Activated T-helper 2 cell treated with anti-CD3 and anti-CD28 coated beads, Interferon-gamma antibody, Interleukin-2, Interleukin-4, amounts not matched to agents 10 μg/mL and 5 μg/mL and 100 μg/mL, durations not matched to agents 14 hours and 24 hours and 36 hours (primary cell): ENCODE measurements at regions of chr18 and their contacts with region 1.

Region 1: DNA sequence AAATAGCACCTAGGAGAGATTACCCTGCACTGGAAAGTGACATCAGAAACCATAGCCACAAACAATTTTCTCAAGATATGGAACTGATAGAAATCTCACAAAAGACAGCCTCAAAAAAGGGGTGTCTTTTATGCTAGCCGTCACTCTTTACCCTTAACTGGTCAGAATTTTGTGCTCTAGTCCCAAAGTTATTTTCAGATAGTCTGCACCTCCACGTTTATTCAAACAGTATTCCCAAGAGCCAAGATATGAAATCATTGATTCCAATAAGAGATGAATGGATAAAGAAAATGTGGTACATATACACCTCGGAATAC is 23.5 kb upstream of the PMAIP1 start:
- DNase-seq: no peak
- H3K4me3 Mint-ChIP-seq: no peak overlapping the region
- H3K27ac Mint-ChIP-seq: no peak overlapping the region
- H3K4me1 Mint-ChIP-seq: peaks cover 31% of the 10 kb centered on the region
- H3K27me3 Mint-ChIP-seq: no peaks in the 10 kb centered on the region

Region 2: DNA sequence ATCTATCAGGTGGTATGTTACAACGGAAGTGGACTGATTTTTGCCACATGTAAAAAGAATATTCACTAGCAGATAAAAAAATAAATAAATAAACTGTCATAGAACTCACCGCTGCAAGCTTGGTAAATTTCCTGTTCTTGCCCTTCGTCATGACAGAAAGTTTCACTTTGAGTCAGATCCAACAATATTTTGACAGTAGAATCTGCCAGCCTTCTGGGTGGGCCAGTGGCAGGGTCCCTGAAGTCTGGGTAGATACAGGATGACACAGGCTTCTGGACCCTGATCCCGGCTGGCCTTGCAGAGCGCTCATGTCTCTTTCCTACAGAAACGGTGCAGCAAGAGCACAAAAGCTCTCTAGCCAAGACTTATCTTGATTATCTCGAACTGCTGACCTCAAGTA is 74.2 kb before region 1 on chr18:
- intact Hi-C with region 1: no loop called
- DNase-seq: no peak
- H3K4me3 Mint-ChIP-seq: no peak overlapping the region
- H3K27ac Mint-ChIP-seq: no peak overlapping the region
- H3K4me1 Mint-ChIP-seq: peaks cover 12% of the 10 kb centered on the region
- H3K27me3 Mint-ChIP-seq: peaks cover 4% of the 10 kb centered on the region

Region 3: DNA sequence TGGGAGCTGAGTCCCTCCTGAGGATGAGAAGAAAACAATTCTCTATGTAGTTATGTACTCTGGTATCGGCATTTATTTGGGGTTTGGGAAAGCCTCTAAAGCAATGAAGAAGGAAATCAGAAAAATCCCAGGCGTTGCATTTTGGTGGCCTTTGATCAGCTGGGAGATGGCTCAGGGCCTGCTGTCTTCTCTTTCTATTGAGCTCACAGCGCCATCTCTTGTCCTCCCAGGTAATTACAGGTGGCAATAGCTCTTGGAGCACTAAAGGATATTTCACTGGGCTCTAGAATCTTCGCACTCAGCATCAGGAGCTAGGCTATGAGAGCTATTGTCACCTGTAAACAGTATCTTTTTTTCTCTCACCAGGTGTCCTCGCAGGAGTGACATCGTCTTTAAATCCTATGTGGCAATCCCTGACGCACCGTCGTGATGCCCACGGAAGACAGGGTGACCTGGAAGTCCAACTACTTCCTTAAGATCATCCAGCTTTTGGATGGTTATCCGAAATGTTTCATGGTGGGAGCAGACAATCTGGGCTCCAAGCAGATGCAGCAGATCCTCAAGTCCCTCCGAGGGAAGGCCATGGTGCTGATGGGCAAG is 52.6 kb before region 1 on chr18:
- intact Hi-C with region 1: no loop called
- DNase-seq: peak; percentile 24
- H3K4me3 Mint-ChIP-seq: no peak overlapping the region
- H3K27ac Mint-ChIP-seq: no peak overlapping the region
- H3K4me1 Mint-ChIP-seq: no peaks in the 10 kb centered on the region
- H3K27me3 Mint-ChIP-seq: peaks cover 14% of the 10 kb centered on the region

Region 4: GRCh38 chr18:59837586-59837985 is 38.7 kb before region 1 on chr18:
- intact Hi-C with region 1: loop called (anchors 5 kb)
- DNase-seq: peak; percentile 25
- H3K4me3 Mint-ChIP-seq: no peak overlapping the region
- H3K27ac Mint-ChIP-seq: no peak overlapping the region
- H3K4me1 Mint-ChIP-seq: peaks cover 7% of the 10 kb centered on the region
- H3K27me3 Mint-ChIP-seq: peaks cover 16% of the 10 kb centered on the region

Region 5: DNA sequence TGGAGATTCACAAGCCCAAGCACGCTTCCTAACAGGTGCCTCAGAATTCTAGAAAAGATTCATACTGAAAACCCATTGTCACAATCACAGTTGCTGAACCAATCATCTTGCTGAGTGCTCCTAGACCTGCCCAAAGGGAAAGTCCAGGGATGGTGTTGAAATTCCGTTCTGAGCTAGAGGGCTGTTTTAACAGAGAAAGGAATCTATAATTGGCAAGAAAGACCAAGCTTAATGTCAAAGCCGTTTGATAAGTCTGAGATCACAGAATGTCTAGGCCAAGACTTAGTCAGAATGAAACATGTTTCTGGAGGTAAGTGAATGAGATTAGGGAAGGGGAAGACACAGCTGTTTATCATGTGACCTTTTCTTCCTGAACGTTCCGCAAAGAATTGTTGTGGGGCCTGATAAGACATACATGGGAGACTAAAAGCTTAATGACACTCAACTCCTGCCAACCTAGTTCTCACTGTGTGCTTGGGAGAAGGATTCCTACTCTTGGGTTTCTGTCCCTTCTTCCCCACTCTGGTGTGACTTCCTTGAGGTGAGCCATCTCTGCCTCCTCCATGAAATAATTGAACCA is 51.1 kb after region 1 on chr18:
- intact Hi-C with region 1: loop called (anchors 1 kb)
- DNase-seq: no peak
- H3K4me3 Mint-ChIP-seq: peak overlapping the region; percentile 34
- H3K27ac Mint-ChIP-seq: peak overlapping the region; percentile 87
- H3K4me1 Mint-ChIP-seq: peaks cover 52% of the 10 kb centered on the region
- H3K27me3 Mint-ChIP-seq: no peaks in the 10 kb centered on the region

Region 6: GRCh38 chr18:60157810-60158209 is 281.5 kb after region 1 on chr18:
- intact Hi-C with region 1: no loop called
- DNase-seq: no peak
- H3K4me3 Mint-ChIP-seq: no peak overlapping the region
- H3K27ac Mint-ChIP-seq: no peak overlapping the region
- H3K4me1 Mint-ChIP-seq: no peaks in the 10 kb centered on the region
- H3K27me3 Mint-ChIP-seq: no peaks in the 10 kb centered on the region